ENCODE measurements at regions of chr3 and their contacts with region 1.

Region 1: GRCh38 chr3:122679085-122679881 is 1.4 kb upstream of the PARP14 start:
- DNase-seq: peak; percentile 91
- H3K4me3 Mint-ChIP-seq: peak overlapping the region; percentile 83
- H3K27ac Mint-ChIP-seq: peak overlapping the region; percentile 96
- H3K4me1 Mint-ChIP-seq: peaks cover 47% of the 10 kb centered on the region
- H3K27me3 Mint-ChIP-seq: no peaks in the 10 kb centered on the region

Region 2: GRCh38 chr3:122299872-122300460 is 379.3 kb before region 1 on chr3:
- CTCF ChIA-PET with region 1: no interaction called
- intact Hi-C with region 1: loop called (anchors 10 kb)
- DNase-seq: peak; percentile 64
- H3K4me3 Mint-ChIP-seq: no peak overlapping the region
- H3K27ac Mint-ChIP-seq: no peak overlapping the region
- H3K4me1 Mint-ChIP-seq: peaks cover 16% of the 10 kb centered on the region
- H3K27me3 Mint-ChIP-seq: peaks cover 1% of the 10 kb centered on the region

Region 3: GRCh38 chr3:122415720-122416654 is 263.3 kb before region 1 on chr3 and contains the start of gene WDR5B:
- CTCF ChIA-PET with region 1: interaction called, 6 read pairs
- intact Hi-C with region 1: loop called (anchors 1 kb)
- DNase-seq: peak; percentile 99
- H3K4me3 Mint-ChIP-seq: peak within 1 kb of the TSS; percentile 95
- H3K27ac Mint-ChIP-seq: peak within 1 kb of the TSS; percentile 98
- H3K4me1 Mint-ChIP-seq: peaks cover 50% of the 10 kb centered on the region
- H3K27me3 Mint-ChIP-seq: no peaks in the 10 kb centered on the region
- total RNA-seq, gene WDR5B: 2.3 to 2.9 TPM

Region 4: DNA sequence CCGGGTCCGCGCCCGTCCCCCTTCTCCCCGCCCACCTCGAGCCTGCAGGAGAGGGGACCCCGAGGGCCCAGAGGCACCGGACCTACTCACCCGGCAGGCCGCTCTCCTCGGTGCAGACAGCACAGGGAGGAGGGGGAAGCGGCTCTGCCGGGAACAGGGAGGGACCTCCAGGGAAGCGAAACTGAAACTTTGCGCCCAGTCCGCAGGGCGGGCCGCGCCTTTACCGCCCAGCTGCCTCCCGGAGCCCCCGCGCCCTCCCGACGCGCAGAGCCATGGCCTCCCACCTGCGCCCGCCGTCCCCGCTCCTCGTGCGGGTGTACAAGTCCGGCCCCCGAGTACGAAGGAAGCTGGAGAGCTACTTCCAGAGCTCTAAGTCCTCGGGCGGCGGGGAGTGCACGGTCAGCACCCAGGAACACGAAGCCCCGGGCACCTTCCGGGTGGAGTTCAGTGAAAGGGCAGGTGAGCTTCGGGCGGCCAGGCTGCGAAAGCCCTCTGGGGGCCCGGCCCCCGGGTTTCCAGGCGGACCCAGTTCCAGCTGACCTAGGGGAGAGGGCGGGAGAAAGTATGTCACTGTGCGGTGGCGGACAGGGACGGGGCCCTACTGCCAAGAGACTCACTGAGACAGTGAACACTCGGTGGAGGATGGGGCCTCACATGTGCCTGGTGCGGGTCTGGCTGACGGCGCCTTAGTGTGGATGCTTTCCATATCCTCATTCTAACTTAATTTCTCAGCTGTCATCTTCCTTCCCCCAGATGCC is 114.9 kb before region 1 on chr3 and contains the starts of genes DTX3L and PARP9:
- CTCF ChIA-PET with region 1: interaction called, 165 read pairs
- intact Hi-C with region 1: loop called (anchors 1 kb)
- DNase-seq: peak; percentile 75
- H3K4me3 Mint-ChIP-seq: peak within 1 kb of the TSS; percentile 87
- H3K27ac Mint-ChIP-seq: peak within 1 kb of the TSS; percentile 93
- H3K4me1 Mint-ChIP-seq: peaks cover 70% of the 10 kb centered on the region
- H3K27me3 Mint-ChIP-seq: no peaks in the 10 kb centered on the region
- total RNA-seq, gene DTX3L: 22.3 to 24.5 TPM
- total RNA-seq, gene PARP9: 20.4 to 21.1 TPM

Region 5: DNA sequence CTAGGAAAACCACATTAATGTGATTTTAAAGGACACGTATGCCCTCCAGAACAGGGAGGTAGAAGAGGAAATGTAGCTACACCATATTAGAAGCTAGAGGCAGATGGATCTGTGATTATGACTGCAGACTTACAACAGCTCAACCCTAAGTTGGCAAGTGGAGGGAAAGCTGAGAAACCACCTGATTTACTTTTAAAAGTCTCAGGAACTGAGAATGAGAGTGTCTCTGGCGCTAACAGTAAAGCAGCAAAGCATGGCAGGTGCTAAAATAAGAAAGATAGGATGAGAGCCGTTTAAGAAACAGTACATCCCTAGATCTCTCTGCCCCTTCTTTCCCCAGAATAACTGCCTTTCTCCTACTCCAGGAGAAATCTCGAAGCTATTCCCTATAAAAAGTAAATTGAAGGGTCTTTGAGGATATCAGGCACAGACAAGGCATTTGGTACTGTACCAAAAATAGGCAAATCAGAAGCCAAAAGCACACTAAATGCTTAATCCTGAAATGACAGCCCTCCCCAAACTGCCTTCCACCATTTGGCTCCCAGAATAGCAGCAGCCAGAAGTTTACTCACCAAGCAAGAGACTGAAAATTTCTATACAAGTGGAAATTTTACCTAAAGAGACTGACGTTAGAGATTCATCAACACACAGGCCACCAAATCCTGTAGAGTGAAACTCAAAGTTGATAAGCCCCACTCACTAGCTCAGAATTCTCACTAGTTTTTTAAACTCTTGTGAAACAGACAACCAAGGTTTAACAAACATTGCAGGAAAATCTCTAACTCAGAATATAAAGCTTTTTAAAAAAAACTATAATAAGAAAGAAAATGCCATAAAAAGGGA is 32.9 kb before region 1 on chr3:
- CTCF ChIA-PET with region 1: interaction called, 15 read pairs
- intact Hi-C with region 1: no loop called
- DNase-seq: peak; percentile 28
- H3K4me3 Mint-ChIP-seq: peak overlapping the region; percentile 28
- H3K27ac Mint-ChIP-seq: peak overlapping the region; percentile 82
- H3K4me1 Mint-ChIP-seq: peaks cover 31% of the 10 kb centered on the region
- H3K27me3 Mint-ChIP-seq: peaks cover 2% of the 10 kb centered on the region

Region 6: GRCh38 chr3:123028233-123028828 is 349.0 kb after region 1 on chr3:
- CTCF ChIA-PET with region 1: no interaction called
- intact Hi-C with region 1: loop called (anchors 5 kb)
- DNase-seq: peak; percentile 36
- H3K4me3 Mint-ChIP-seq: peak overlapping the region; percentile 55
- H3K27ac Mint-ChIP-seq: no peak overlapping the region
- H3K4me1 Mint-ChIP-seq: peaks cover 11% of the 10 kb centered on the region
- H3K27me3 Mint-ChIP-seq: peaks cover 55% of the 10 kb centered on the region